CD8-positive, alpha-beta T cell (primary cell): ENCODE measurements at regions of chr15 and their contacts with region 1.

Region 1: DNA sequence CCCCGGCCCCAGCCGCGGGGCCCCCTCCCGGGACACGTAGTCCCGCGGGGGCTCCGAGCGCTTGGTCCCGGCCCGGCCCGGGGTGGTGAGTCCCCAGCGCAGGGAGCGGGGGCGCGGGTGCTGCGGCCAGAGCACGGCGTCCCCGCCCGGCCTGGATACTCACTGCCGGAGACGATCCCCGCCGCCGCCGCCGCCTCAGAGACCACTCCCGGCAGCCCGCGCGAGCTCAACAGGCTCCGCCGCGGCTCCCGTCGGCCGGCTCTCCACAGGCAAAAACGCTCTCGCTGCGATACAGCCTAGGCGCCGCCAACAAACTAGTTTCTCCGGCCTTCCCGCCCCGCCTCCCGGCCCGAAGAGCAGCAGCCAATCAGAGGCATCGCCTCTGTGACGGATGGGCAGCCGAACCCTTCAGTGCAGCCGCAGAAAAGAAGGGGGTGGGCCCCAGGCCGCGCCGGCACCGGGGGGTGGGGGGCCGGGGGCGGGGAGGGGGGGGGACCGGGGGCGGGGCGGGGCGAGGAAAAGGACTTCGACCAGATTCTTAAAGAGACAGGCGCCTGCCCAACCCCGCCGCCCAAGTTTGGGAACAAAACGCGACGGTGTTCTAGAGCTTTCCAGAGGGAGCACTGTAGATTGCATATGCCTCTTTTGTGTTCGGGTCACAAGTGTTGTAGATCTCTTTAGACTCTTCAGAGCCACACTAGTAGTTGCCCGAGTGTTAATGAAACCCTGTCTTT is at the start of gene KLHL25:
- DNase-seq: peak; percentile 84 to 97 (median 90)
- ATAC-seq: peak; percentile 98
- H3K4me3 ChIP-seq: peak within 1 kb of the TSS; percentile 62 to 86
- H3K4me3 Mint-ChIP-seq: peak within 1 kb of the TSS; percentile 93
- H3K27ac ChIP-seq: peak within 1 kb of the TSS; percentile 40 to 56
- H3K27ac Mint-ChIP-seq: peak within 1 kb of the TSS; percentile 89
- H3K4me1 ChIP-seq: peaks cover 28% of the 10 kb centered on the region
- H3K4me1 Mint-ChIP-seq: peaks cover 39% of the 10 kb centered on the region
- H3K27me3 ChIP-seq: no peaks in the 10 kb centered on the region
- H3K27me3 Mint-ChIP-seq: peaks cover 3% of the 10 kb centered on the region
- CTCF ChIP-seq: no peak
- total RNA-seq, gene KLHL25: 4.3 to 4.9 TPM

Region 2: GRCh38 chr15:85750319-85750806 is 44.4 kb before region 1 on chr15:
- CTCF ChIA-PET with region 1: no interaction called
- POLR2A ChIA-PET with region 1: interaction called, 3 read pairs
- intact Hi-C with region 1: loop called (anchors 5 kb)
- DNase-seq: peak in 1 of 9 experiments; percentile 26
- ATAC-seq: no peak
- H3K4me3 ChIP-seq: no peak overlapping the region
- H3K4me3 Mint-ChIP-seq: no peak overlapping the region
- H3K27ac ChIP-seq: no peak overlapping the region
- H3K27ac Mint-ChIP-seq: peak overlapping the region; percentile 80
- H3K4me1 ChIP-seq: peaks cover 26% of the 10 kb centered on the region
- H3K4me1 Mint-ChIP-seq: peaks cover 37% of the 10 kb centered on the region
- H3K27me3 ChIP-seq: no peaks in the 10 kb centered on the region
- H3K27me3 Mint-ChIP-seq: no peaks in the 10 kb centered on the region
- CTCF ChIP-seq: no peak